Caco-2 (cell line): ENCODE measurements at regions of chr12 and their contacts with region 1.

Region 1: GRCh38 chr12:10235761-10236631 is 23.3 kb downstream of the GABARAPL1 start:
- DNase-seq: peak in 1 of 2 experiments; percentile 43
- H3K4me3 ChIP-seq: no peak overlapping the region
- H3K4me3 Mint-ChIP-seq: no peak overlapping the region
- H3K27ac Mint-ChIP-seq: no peak overlapping the region
- H3K4me1 ChIP-seq: no peaks in the 10 kb centered on the region
- H3K4me1 Mint-ChIP-seq: no peaks in the 10 kb centered on the region
- H3K27me3 ChIP-seq: no peaks in the 10 kb centered on the region
- H3K27me3 Mint-ChIP-seq: peaks cover 4% of the 10 kb centered on the region
- CTCF ChIP-seq: peak; percentile 81 to 87

Region 2: GRCh38 chr12:10364815-10365622 is 129.0 kb after region 1 on chr12:
- CTCF ChIA-PET with region 1: no interaction called
- POLR2A ChIA-PET with region 1: no interaction called
- intact Hi-C with region 1: loop called (anchors 10 kb)
- DNase-seq: peak; percentile 84 to 88
- H3K4me3 ChIP-seq: peak overlapping the region; percentile 39
- H3K4me3 Mint-ChIP-seq: no peak overlapping the region
- H3K27ac Mint-ChIP-seq: no peak overlapping the region
- H3K4me1 ChIP-seq: peaks cover 57% of the 10 kb centered on the region
- H3K4me1 Mint-ChIP-seq: peaks cover 14% of the 10 kb centered on the region
- H3K27me3 ChIP-seq: no peaks in the 10 kb centered on the region
- H3K27me3 Mint-ChIP-seq: no peaks in the 10 kb centered on the region
- CTCF ChIP-seq: no peak

Region 3: GRCh38 chr12:10409387-10409786 is 173.4 kb after region 1 on chr12 and contains the start of gene KLRC4:
- CTCF ChIA-PET with region 1: no interaction called
- POLR2A ChIA-PET with region 1: no interaction called
- intact Hi-C with region 1: loop called (anchors 2 kb)
- DNase-seq: no peak
- H3K4me3 ChIP-seq: no peak within 1 kb of the TSS
- H3K4me3 Mint-ChIP-seq: no peak within 1 kb of the TSS
- H3K27ac Mint-ChIP-seq: no peak within 1 kb of the TSS
- H3K4me1 ChIP-seq: no peaks in the 10 kb centered on the region
- H3K4me1 Mint-ChIP-seq: peaks cover 5% of the 10 kb centered on the region
- H3K27me3 ChIP-seq: no peaks in the 10 kb centered on the region
- H3K27me3 Mint-ChIP-seq: no peaks in the 10 kb centered on the region
- CTCF ChIP-seq: no peak
- total RNA-seq, gene KLRC4: not detected in 2 replicates

Region 4: GRCh38 chr12:10501031-10501430 is 265.0 kb after region 1 on chr12:
- CTCF ChIA-PET with region 1: no interaction called
- POLR2A ChIA-PET with region 1: no interaction called
- intact Hi-C with region 1: loop called (anchors 2 kb)
- DNase-seq: no peak
- H3K4me3 ChIP-seq: no peak overlapping the region
- H3K4me3 Mint-ChIP-seq: no peak overlapping the region
- H3K27ac Mint-ChIP-seq: no peak overlapping the region
- H3K4me1 ChIP-seq: no peaks in the 10 kb centered on the region
- H3K4me1 Mint-ChIP-seq: no peaks in the 10 kb centered on the region
- H3K27me3 ChIP-seq: no peaks in the 10 kb centered on the region
- H3K27me3 Mint-ChIP-seq: peaks cover 17% of the 10 kb centered on the region
- CTCF ChIP-seq: peak; percentile 34 to 38

Region 5: GRCh38 chr12:10562306-10562933 is 326.4 kb after region 1 on chr12:
- CTCF ChIA-PET with region 1: interaction called, 4 read pairs
- POLR2A ChIA-PET with region 1: no interaction called
- intact Hi-C with region 1: loop called (anchors 1 kb)
- DNase-seq: peak in 1 of 2 experiments; percentile 49
- H3K4me3 ChIP-seq: no peak overlapping the region
- H3K4me3 Mint-ChIP-seq: no peak overlapping the region
- H3K27ac Mint-ChIP-seq: no peak overlapping the region
- H3K4me1 ChIP-seq: no peaks in the 10 kb centered on the region
- H3K4me1 Mint-ChIP-seq: no peaks in the 10 kb centered on the region
- H3K27me3 ChIP-seq: no peaks in the 10 kb centered on the region
- H3K27me3 Mint-ChIP-seq: peaks cover 9% of the 10 kb centered on the region
- CTCF ChIP-seq: peak; percentile 67 to 83

Region 6: DNA sequence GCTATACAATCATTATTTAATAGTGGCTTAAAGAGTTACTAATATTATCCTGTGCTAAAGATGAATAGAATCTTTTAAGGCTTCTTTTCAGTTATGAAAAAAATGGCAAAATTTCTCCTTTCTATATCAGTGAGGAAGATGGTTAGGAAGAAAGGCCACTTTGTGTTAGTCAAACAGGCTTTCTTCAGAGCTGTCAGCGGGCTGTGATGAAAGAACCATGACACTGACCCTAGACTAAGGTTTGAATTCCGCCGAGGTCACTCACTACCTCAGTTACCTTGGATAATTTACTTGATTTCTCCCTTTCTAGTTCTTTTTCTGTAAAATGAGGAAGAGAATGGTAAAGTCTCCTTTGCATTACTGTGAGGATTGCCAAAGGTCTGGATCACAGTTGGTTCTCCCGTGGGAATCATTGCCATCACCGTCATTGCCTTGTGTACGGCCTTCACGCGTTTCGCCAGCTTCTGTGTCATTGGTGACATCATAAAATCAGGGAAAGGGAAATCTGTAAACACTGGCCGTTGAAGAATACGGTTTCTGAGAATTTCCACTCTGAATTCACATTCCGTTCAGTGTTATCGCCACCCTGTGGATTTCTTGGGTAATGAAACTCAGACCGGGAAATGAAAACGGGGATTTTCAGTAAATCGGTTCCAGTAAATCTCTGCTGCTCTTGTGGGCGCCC is 513.8 kb after region 1 on chr12:
- CTCF ChIA-PET with region 1: no interaction called
- POLR2A ChIA-PET with region 1: no interaction called
- intact Hi-C with region 1: loop called (anchors 1 kb)
- DNase-seq: peak; percentile 87 to 91
- H3K4me3 ChIP-seq: peak overlapping the region; percentile 24
- H3K4me3 Mint-ChIP-seq: peak overlapping the region; percentile 70
- H3K27ac Mint-ChIP-seq: no peak overlapping the region
- H3K4me1 ChIP-seq: no peaks in the 10 kb centered on the region; the same call in 1 of the 2 replicates
- H3K4me1 Mint-ChIP-seq: peaks cover 6% of the 10 kb centered on the region
- H3K27me3 ChIP-seq: no peaks in the 10 kb centered on the region
- H3K27me3 Mint-ChIP-seq: peaks cover 9% of the 10 kb centered on the region
- CTCF ChIP-seq: peak; percentile 96 to 99